ENCODE measurements at regions of chr2 and their contacts with region 1.

Region 1: GRCh38 chr2:233053928-233054784 is 6.0 kb upstream of the INPP5D start:
- DNase-seq: peak in 41 of 42 donors; percentile 54 to 91 (median 74)

Region 2: GRCh38 chr2:232600053-232600773 is 453.9 kb before region 1 on chr2:
- intact Hi-C with region 1: loop called (anchors 10 kb)
- DNase-seq: no peak

Region 3: DNA sequence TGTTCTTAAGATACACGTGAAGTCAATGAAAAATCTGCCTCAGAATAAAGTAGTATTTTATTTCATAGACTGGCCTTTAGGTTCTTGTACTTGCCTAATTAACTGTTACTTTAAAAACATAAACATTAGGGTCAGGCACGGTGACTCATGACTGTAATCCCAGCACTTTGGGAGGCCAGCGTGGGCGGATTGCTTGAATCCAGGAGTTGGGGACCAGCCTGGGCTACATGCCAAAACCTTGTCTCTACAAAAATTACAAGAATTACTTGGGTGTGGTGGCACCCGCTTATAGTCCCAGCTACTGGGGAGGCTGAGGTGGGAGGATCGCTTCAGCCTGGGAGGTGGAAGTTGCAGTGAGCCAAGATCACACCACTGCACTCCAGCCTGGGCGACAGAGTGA is 200.1 kb before region 1 on chr2:
- intact Hi-C with region 1: loop called (anchors 10 kb)
- DNase-seq: peak in 18 of 42 donors; percentile 13 to 68 (median 29)

Region 4: GRCh38 chr2:232903989-232904388 is 150.2 kb before region 1 on chr2:
- intact Hi-C with region 1: no loop called
- DNase-seq: peak in 10 of 42 donors; percentile 0 to 34 (median 8)

Region 5: GRCh38 chr2:233234264-233234663 is 180.1 kb after region 1 on chr2:
- intact Hi-C with region 1: loop called (anchors 10 kb)
- DNase-seq: no peak

Region 6: GRCh38 chr2:233261819-233262555 is 207.8 kb after region 1 on chr2:
- intact Hi-C with region 1: no loop called
- DNase-seq: no peak

Measured in head of caudate nucleus (tissue), 42 donors.